OCI-LY7 (cell line): ENCODE measurements at regions of chr18 and their contacts with region 1.

Region 1: DNA sequence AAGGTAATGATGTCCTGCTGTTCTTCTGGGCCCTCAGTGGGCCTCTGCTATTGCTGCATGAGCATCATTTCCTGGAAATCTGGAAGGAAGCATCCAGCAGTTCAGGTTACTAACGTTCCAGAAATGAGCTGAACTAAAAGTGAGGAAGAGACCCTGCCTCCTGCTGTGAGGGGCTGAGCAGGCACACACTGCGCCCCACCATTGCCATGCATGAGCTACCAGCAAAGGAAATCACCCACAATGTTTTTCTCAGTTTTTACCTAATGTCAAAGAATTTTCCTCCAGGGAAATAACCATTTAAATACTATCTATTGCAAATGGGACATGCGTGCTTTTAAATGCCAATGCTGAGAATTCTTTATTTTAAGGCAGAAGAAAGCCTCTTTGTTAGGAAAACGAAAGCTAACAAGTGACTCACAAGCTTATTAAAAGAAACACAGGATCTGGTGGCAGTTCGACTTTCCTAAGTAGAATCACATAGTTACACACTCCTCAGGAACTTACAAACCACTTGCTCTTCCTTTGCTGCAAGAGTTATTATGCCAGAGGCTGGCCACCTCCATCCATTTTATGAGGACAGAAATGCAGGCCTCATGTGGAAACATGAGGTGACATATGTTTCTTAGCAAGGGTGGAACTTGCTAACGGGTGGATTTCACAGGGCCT is 152.6 kb upstream of the TTC39C start:
- DNase-seq: no peak
- H3K4me3 ChIP-seq: no peak overlapping the region
- H3K27ac ChIP-seq: peak overlapping the region; percentile 95
- H3K4me1 ChIP-seq: peaks cover 57% of the 10 kb centered on the region
- CTCF ChIP-seq: no peak

Region 2: GRCh38 chr18:23849141-23849540 is 12.8 kb before region 1 on chr18:
- CTCF ChIA-PET with region 1: interaction called, 7 read pairs
- POLR2A ChIA-PET with region 1: interaction called, 10 read pairs
- intact Hi-C with region 1: no loop called
- DNase-seq: no peak
- H3K4me3 ChIP-seq: no peak overlapping the region
- H3K27ac ChIP-seq: no peak overlapping the region
- H3K4me1 ChIP-seq: peaks cover 25% of the 10 kb centered on the region
- CTCF ChIP-seq: no peak